CD8-positive, alpha-beta memory T cell (primary cell): ENCODE measurements at regions of chr1 and their contacts with region 1.

Region 1: DNA sequence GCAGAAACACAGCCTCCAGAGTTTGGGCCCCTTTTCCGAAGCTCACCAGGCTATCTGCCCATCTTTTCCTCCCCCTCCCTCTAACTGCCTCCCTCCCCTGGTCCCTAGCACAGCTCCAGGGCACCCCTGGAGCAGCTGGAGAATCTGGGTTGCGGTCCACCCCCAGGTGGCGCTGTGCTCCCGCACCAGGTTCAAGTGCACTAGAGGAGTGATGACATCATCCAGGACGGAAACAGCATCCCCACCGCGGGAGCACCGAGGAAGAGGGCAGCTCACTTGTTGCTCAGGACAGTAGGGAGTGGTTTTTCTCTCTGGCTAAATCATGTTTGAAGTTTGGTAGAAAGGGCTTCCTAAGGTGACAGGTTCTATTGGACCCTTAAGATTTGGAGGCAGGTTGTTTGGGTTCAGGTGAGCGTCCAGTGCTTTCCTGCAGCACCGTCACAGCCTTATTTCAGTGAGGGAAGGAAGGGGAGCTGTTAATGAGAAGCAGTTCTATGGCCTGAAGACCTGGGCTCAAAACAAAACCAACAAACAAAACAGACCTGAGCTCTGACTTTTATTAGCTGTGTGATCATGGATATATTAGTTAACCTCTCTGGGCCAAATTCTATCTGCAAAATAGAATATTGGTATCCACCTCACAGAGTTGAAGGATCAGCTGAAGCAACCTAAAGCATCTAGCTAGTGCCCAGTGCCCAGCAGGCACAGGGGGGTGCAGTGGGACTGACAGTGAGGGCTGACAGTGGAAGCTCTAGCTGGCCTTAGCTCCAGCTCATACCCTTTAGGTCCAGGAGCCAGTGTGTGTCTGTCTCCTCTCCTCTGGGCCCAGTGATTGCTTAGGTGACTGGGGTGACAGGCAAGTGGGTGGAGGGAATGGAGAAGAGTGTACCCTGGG is 7.5 kb downstream of the SHISA4 start:
- DNase-seq: peak; percentile 67 to 88 (median 71)
- H3K4me3 ChIP-seq: no peak overlapping the region
- H3K4me3 Mint-ChIP-seq: peak overlapping the region in 6 of 7 donors; percentile 38 to 79 (median 67)
- H3K27ac ChIP-seq: no peak overlapping the region
- H3K27ac Mint-ChIP-seq: peak overlapping the region in 7 of 8 donors; percentile 26 to 86 (median 79)
- H3K4me1 ChIP-seq: peaks cover 5% of the 10 kb centered on the region
- H3K4me1 Mint-ChIP-seq: peaks cover 5 to 8% (median 7%) of the 10 kb centered on the region in 3 donors
- H3K27me3 ChIP-seq: peaks cover 10% of the 10 kb centered on the region
- H3K27me3 Mint-ChIP-seq: peaks cover 25 to 37% of the 10 kb centered on the region in 2 donors

Region 2: GRCh38 chr1:201882665-201883132 is 13.5 kb before region 1 on chr1:
- CTCF ChIA-PET with region 1: interaction called, 45 read pairs
- POLR2A ChIA-PET with region 1: interaction called, 3 read pairs
- DNase-seq: no peak
- H3K4me3 ChIP-seq: no peak overlapping the region
- H3K4me3 Mint-ChIP-seq: no peak overlapping the region
- H3K27ac ChIP-seq: no peak overlapping the region
- H3K27ac Mint-ChIP-seq: no peak overlapping the region
- H3K4me1 ChIP-seq: no peaks in the 10 kb centered on the region
- H3K4me1 Mint-ChIP-seq: no peaks in the 10 kb centered on the region
- H3K27me3 ChIP-seq: peaks cover 2% of the 10 kb centered on the region
- H3K27me3 Mint-ChIP-seq: peaks cover 8 to 11% of the 10 kb centered on the region in 2 donors

Region 3: GRCh38 chr1:201964261-201964660 is 68.1 kb after region 1 on chr1:
- CTCF ChIA-PET with region 1: interaction called, 17 read pairs
- POLR2A ChIA-PET with region 1: no interaction called
- DNase-seq: no peak
- H3K4me3 ChIP-seq: no peak overlapping the region
- H3K4me3 Mint-ChIP-seq: no peak overlapping the region
- H3K27ac ChIP-seq: no peak overlapping the region
- H3K27ac Mint-ChIP-seq: no peak overlapping the region
- H3K4me1 ChIP-seq: no peaks in the 10 kb centered on the region
- H3K4me1 Mint-ChIP-seq: no peaks in the 10 kb centered on the region
- H3K27me3 ChIP-seq: no peaks in the 10 kb centered on the region
- H3K27me3 Mint-ChIP-seq: no peaks in the 10 kb centered on the region

Region 4: GRCh38 chr1:201970334-201971159 is 74.4 kb after region 1 on chr1:
- CTCF ChIA-PET with region 1: interaction called, 48 read pairs
- POLR2A ChIA-PET with region 1: interaction called, 3 read pairs
- DNase-seq: no peak
- H3K4me3 ChIP-seq: no peak overlapping the region
- H3K4me3 Mint-ChIP-seq: no peak overlapping the region
- H3K27ac ChIP-seq: no peak overlapping the region
- H3K27ac Mint-ChIP-seq: peak overlapping the region in 2 of 8 donors; percentile 0 to 36
- H3K4me1 ChIP-seq: no peaks in the 10 kb centered on the region
- H3K4me1 Mint-ChIP-seq: peaks cover 0 to 3% (median 0%) of the 10 kb centered on the region in 3 donors
- H3K27me3 ChIP-seq: no peaks in the 10 kb centered on the region
- H3K27me3 Mint-ChIP-seq: no peaks in the 10 kb centered on the region

Region 5: DNA sequence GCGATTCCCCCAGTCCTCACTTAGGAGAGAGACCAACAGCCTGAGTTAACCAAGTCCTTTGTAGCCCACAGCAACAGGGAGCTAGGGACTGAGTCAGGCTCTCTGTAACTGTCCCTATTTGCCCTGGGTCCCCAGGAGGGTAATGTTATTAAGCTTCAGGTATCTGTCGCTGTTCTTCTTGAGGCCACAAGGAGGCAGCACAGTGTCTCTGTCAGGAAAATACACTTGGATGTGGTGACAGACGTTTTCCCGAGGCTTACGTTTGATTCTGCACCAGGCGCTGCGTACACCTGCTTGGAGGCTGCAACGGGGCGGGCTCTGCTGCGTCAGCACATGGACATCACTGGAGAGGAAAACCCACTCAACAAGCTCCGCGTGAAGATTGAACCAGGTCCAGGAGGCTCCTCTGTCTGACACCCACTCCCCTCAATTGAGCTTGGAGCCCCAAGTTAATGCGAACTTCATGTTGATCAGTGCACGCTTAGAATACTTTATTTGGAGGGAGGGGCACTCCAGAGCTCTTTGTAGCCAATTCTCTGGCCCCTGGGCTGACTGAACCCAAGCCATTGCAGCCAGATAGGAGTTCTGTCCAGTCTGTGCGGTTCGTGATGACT is 103.6 kb after region 1 on chr1:
- CTCF ChIA-PET with region 1: interaction called, 15 read pairs
- POLR2A ChIA-PET with region 1: no interaction called
- DNase-seq: peak in 1 of 5 donors; percentile 4
- H3K4me3 ChIP-seq: no peak overlapping the region
- H3K4me3 Mint-ChIP-seq: no peak overlapping the region
- H3K27ac ChIP-seq: no peak overlapping the region
- H3K27ac Mint-ChIP-seq: peak overlapping the region in 1 of 8 donors; percentile 58
- H3K4me1 ChIP-seq: no peaks in the 10 kb centered on the region
- H3K4me1 Mint-ChIP-seq: no peaks in the 10 kb centered on the region
- H3K27me3 ChIP-seq: no peaks in the 10 kb centered on the region
- H3K27me3 Mint-ChIP-seq: no peaks in the 10 kb centered on the region